ENCODE measurements at regions of chr10 and their contacts with region 1.

Region 1: GRCh38 chr10:8084837-8085650 is 30.6 kb downstream of the GATA3 start:
- DNase-seq: no peak
- H3K27ac ChIP-seq: no peak overlapping the region
- CTCF ChIP-seq: no peak

Region 2: DNA sequence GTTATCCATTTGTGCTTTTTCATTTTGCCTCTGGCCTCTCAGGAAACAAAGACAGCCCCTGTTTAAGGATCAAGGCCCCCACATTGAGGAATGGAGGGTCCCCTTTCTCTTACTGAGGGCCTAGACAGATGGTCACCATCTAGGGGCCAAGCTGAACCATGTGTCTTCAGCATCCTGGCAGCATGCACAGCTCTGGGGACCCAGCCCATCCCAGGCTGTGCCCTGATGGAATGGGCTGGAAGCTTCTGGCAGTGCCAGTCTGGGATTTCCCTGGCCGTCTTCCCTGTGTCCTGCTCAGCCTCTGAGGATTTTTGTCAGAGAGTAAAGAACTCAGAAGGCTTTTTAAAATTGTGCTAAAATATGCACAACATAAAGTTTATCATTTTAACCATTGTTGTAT is 535.0 kb before region 1 on chr10:
- CTCF ChIA-PET with region 1: no interaction called
- POLR2A ChIA-PET with region 1: interaction called, 11 read pairs
- DNase-seq: no peak
- H3K27ac ChIP-seq: no peak overlapping the region
- CTCF ChIP-seq: no peak

Region 3: GRCh38 chr10:7797582-7797981 is 287.5 kb before region 1 on chr10:
- CTCF ChIA-PET with region 1: no interaction called
- POLR2A ChIA-PET with region 1: no interaction called
- DNase-seq: peak; percentile 69
- H3K27ac ChIP-seq: no peak overlapping the region
- CTCF ChIP-seq: no peak

Region 4: DNA sequence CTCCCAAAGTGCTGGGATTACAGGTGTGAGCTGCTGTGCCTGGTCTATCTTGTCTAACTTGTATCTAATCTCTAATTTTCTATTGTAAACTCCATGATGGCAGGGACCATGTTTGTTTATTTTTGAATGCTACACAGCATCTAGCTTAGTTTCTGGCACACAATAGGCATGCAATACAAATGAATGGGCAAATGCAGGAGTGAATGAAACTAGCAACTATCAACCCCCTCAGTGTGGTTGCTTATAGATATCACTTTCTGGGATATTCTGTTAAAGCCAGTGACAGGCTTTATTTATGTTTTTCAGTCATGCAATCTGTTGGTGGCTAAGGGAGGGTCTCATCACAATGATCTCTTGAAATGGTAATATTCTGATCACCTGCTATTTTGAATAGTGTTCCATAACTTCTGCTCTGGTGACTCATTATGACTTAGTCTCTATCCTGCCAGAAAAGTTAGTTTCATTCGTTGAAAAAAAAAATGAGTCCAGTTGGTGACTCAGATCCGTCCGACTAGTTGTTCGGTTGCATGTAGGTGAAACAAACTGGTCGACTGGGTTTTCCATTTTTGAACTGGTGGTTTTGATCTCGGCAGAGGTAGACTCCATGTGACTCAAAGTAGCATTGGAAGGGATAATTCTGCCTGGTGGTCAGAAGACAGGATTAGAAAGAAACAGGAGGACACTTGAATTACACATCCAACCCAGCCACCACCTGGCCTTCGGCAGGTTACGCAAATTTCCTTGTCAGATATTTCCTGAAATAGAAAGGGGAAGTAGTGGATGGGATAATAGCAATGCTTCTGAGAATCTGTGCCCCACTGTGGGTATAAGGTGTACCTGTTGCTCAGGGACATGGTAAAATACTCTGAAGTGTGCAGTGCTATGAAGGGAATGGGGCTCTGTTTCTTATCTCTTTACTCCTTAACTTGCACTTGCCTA is 46.2 kb after region 1 on chr10:
- CTCF ChIA-PET with region 1: no interaction called
- POLR2A ChIA-PET with region 1: no interaction called
- DNase-seq: peak; percentile 89
- H3K27ac ChIP-seq: no peak overlapping the region
- CTCF ChIP-seq: no peak